HCT116 (cell line): ENCODE measurements at regions of chr4 and their contacts with region 1.

Region 1: GRCh38 chr4:179307297-179308136 is 1865.3 kb upstream of the AGA start:
- DNase-seq: peak; percentile 42
- ATAC-seq: peak; percentile 85
- H3K4me3 ChIP-seq: no peak overlapping the region
- H3K27ac ChIP-seq: no peak overlapping the region
- H3K4me1 ChIP-seq: no peaks in the 10 kb centered on the region
- H3K27me3 ChIP-seq: no peaks in the 10 kb centered on the region
- CTCF ChIP-seq: peak; percentile 51 to 87 (median 68)
- POLR2A ChIP-seq: no peak
- RAD21 ChIP-seq: peak; percentile 78

Region 2: DNA sequence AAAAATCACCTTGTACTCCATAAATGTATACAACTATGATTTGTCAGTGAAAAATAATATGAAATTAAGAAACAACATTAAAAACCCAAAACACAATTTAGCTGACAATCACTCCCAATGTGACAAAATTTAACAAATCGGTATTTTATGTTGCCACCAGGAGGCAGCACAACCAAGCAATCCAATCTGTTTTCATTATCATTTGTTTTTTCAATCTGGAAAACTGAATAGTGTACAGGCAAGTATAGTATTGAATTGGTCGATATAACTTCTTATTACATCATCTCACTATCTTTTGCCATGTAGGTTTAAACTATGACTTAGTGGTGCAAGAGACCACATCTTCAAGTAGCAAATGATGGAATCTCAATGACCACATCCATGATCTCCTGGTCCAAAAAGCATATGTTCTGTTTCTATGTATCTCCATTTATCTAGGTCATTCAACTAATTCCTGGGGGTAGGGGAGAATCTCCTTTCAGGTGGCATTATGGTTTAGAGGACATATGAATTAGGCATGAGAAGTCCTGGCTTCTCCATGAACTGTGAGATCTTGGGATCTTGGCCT is 1752.4 kb before region 1 on chr4:
- CTCF ChIA-PET with region 1: no interaction called
- POLR2A ChIA-PET with region 1: no interaction called
- RAD21 ChIA-PET with region 1: no interaction called
- intact Hi-C with region 1: loop called (anchors 5 kb)
- DNase-seq: no peak
- ATAC-seq: peak; percentile 64
- H3K4me3 ChIP-seq: no peak overlapping the region
- H3K27ac ChIP-seq: no peak overlapping the region
- H3K4me1 ChIP-seq: no peaks in the 10 kb centered on the region
- H3K27me3 ChIP-seq: no peaks in the 10 kb centered on the region
- CTCF ChIP-seq: peak; percentile 47 to 81 (median 51); a peak in 5 of 6 replicates
- POLR2A ChIP-seq: no peak
- RAD21 ChIP-seq: peak; percentile 86

Region 3: GRCh38 chr4:177579649-177580048 is 1727.9 kb before region 1 on chr4:
- CTCF ChIA-PET with region 1: interaction called, 10 read pairs
- POLR2A ChIA-PET with region 1: no interaction called
- RAD21 ChIA-PET with region 1: no interaction called
- intact Hi-C with region 1: no loop called
- DNase-seq: no peak
- ATAC-seq: no peak
- H3K4me3 ChIP-seq: no peak overlapping the region
- H3K27ac ChIP-seq: no peak overlapping the region
- H3K4me1 ChIP-seq: peaks cover 0 to 4% of the 10 kb centered on the region in 2 experiments; a peak in 2 of 4 replicates
- H3K27me3 ChIP-seq: no peaks in the 10 kb centered on the region
- CTCF ChIP-seq: peak; percentile 8 to 41 (median 31); a peak in 2 of 6 replicates
- POLR2A ChIP-seq: no peak
- RAD21 ChIP-seq: peak; percentile 67

Region 4: DNA sequence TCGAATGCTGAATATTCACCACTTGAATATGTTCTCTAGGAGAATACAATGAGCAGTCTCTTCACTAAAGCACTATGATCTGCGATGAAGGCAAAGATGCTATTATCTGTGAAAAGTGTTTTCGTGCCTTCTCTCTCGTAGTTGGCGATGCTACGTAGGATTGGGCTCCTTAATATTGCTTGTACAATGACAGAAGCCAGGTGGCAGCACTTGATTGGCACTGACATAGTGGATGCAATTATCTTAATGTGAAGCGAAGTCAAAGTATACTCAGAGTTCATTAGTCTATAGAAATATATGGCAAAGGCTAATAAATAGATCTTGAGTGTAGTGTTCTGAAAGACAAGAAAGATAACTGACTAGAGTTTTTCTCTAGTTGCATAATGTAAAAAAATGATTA is 729.6 kb before region 1 on chr4:
- CTCF ChIA-PET with region 1: interaction called, 13 read pairs
- POLR2A ChIA-PET with region 1: no interaction called
- RAD21 ChIA-PET with region 1: no interaction called
- intact Hi-C with region 1: loop called (anchors 2 kb)
- DNase-seq: no peak
- ATAC-seq: peak; percentile 68
- H3K4me3 ChIP-seq: no peak overlapping the region
- H3K27ac ChIP-seq: no peak overlapping the region
- H3K4me1 ChIP-seq: no peaks in the 10 kb centered on the region
- H3K27me3 ChIP-seq: no peaks in the 10 kb centered on the region
- CTCF ChIP-seq: peak in 2 of 3 experiments; percentile 49 to 64; a peak in 4 of 6 replicates
- POLR2A ChIP-seq: no peak
- RAD21 ChIP-seq: peak; percentile 69

Region 5: GRCh38 chr4:178599521-178599920 is 708.0 kb before region 1 on chr4:
- CTCF ChIA-PET with region 1: interaction called, 9 read pairs
- POLR2A ChIA-PET with region 1: no interaction called
- RAD21 ChIA-PET with region 1: no interaction called
- intact Hi-C with region 1: loop called (anchors 1 kb)
- DNase-seq: no peak
- ATAC-seq: peak; percentile 66
- H3K4me3 ChIP-seq: no peak overlapping the region
- H3K27ac ChIP-seq: no peak overlapping the region
- H3K4me1 ChIP-seq: no peaks in the 10 kb centered on the region
- H3K27me3 ChIP-seq: no peaks in the 10 kb centered on the region
- CTCF ChIP-seq: peak; percentile 27 to 49 (median 37); a peak in 5 of 6 replicates
- POLR2A ChIP-seq: no peak
- RAD21 ChIP-seq: peak; percentile 74

Region 6: DNA sequence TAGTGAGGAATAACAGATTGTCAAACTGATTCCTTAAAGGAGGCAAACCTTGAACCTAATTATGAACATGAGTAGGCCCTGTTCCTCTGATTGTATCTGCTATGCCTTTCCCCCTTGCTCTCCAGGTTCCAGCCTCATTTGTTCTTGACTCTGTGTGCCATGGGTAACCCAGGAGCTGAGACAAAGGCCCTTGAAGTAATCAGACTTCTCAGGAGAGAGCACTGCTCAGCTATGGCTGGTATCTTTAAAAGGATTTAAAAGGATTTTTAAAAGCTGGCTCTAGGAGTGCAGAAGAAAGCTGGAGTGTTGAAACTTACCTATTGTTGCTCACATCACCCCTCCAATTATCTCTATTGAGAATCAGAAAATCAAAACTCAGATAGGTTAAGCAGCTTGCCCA is 299.8 kb before region 1 on chr4:
- CTCF ChIA-PET with region 1: interaction called, 10 read pairs
- POLR2A ChIA-PET with region 1: no interaction called
- RAD21 ChIA-PET with region 1: no interaction called
- intact Hi-C with region 1: loop called (anchors 10 kb)
- DNase-seq: no peak
- ATAC-seq: no peak
- H3K4me3 ChIP-seq: no peak overlapping the region
- H3K27ac ChIP-seq: no peak overlapping the region
- H3K4me1 ChIP-seq: no peaks in the 10 kb centered on the region
- H3K27me3 ChIP-seq: no peaks in the 10 kb centered on the region
- CTCF ChIP-seq: no peak
- POLR2A ChIP-seq: no peak
- RAD21 ChIP-seq: peak; percentile 37